Activated CD8-positive, alpha-beta T cell treated with anti-CD3 and anti-CD28 coated beads for 36 hours (primary cell): ENCODE measurements at regions of chr2 and their contacts with region 1.

Region 1: GRCh38 chr2:170409164-170409535 is 231.2 kb downstream of the MYO3B start:
- DNase-seq: peak; percentile 87
- ATAC-seq: peak; percentile 75
- H3K4me3 Mint-ChIP-seq: peak overlapping the region; percentile 39
- H3K27ac Mint-ChIP-seq: no peak overlapping the region
- H3K4me1 Mint-ChIP-seq: peaks cover 4% of the 10 kb centered on the region
- H3K27me3 Mint-ChIP-seq: peaks cover 20% of the 10 kb centered on the region
- CTCF ChIP-seq: peak; percentile 90

Region 2: DNA sequence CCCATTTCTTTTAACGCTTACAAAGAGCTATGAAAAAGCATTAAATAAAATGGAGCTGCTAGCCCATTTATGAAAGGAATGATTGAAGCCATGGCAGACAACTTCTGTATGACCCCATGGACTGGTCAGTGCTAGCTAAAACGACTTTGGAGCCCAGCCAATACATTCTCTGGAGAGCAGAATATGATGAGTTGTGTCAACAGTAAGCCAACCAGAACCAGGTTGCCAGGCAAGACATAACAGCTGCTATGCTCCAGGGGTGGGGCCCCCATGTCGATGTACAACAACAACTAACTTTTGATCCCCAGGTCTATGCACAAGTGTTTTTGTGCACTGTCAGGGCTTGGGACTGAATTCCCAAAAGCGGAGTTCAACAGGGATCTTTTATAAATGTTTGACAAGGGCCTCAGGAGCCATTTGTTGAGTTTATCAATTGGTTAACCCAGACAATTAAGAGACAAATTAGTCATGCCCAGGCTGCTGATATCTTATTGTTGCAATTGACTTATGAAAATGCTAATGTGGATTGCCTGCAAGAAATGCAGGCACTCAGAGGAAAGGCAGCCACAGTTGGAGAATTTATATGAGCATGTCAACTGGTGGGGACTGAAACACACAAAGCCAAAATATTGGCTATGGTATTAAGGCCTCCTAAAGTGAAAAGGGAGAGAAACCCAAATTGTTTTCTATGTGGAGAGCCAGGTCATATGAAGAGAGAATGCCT is 295.8 kb before region 1 on chr2:
- CTCF ChIA-PET with region 1: no interaction called
- POLR2A ChIA-PET with region 1: no interaction called
- intact Hi-C with region 1: no loop called
- DNase-seq: no peak
- ATAC-seq: no peak
- H3K4me3 Mint-ChIP-seq: no peak overlapping the region
- H3K27ac Mint-ChIP-seq: no peak overlapping the region
- H3K4me1 Mint-ChIP-seq: no peaks in the 10 kb centered on the region
- H3K27me3 Mint-ChIP-seq: no peaks in the 10 kb centered on the region
- CTCF ChIP-seq: no peak

Region 3: GRCh38 chr2:170202437-170202836 is 206.7 kb before region 1 on chr2:
- CTCF ChIA-PET with region 1: no interaction called
- POLR2A ChIA-PET with region 1: no interaction called
- intact Hi-C with region 1: no loop called
- DNase-seq: no peak
- ATAC-seq: no peak
- H3K4me3 Mint-ChIP-seq: no peak overlapping the region
- H3K27ac Mint-ChIP-seq: no peak overlapping the region
- H3K4me1 Mint-ChIP-seq: no peaks in the 10 kb centered on the region
- H3K27me3 Mint-ChIP-seq: peaks cover 10% of the 10 kb centered on the region
- CTCF ChIP-seq: no peak

Region 4: DNA sequence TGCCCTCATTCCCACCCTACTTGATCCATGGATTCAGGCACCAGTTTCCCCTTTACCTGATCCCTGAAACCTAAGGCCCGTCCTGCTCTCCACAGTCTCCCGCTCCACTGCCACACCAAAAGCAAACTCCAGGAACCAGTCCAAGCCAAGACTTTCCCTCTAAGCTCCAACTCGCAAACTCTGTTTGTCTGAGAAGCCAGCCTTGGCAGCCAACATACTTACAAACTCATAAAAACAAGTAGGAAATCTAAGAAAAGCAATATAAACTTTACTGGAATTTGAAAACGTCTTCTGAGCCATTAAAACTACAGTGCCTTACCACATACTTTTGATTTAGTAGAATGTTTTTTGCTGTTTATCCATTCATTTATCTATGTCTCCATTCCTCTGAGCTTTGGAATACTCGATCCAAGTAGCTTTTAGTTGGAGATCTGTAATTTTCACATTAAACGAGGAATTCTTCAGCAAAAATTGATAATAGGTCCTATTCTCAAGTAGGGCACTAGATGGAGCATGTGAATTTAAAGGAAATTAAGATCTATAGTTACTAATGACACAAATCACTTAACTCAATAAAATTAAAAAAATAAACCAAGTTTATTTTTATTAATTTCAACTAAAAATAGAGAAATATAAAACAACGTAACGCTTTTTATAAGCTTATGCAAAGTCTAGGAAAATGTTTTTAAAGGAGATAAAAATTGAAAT is 31.5 kb before region 1 on chr2:
- CTCF ChIA-PET with region 1: interaction called, 14 read pairs
- POLR2A ChIA-PET with region 1: no interaction called
- intact Hi-C with region 1: no loop called
- DNase-seq: no peak
- ATAC-seq: no peak
- H3K4me3 Mint-ChIP-seq: no peak overlapping the region
- H3K27ac Mint-ChIP-seq: no peak overlapping the region
- H3K4me1 Mint-ChIP-seq: peaks cover 8% of the 10 kb centered on the region
- H3K27me3 Mint-ChIP-seq: peaks cover 25% of the 10 kb centered on the region
- CTCF ChIP-seq: no peak

Region 5: DNA sequence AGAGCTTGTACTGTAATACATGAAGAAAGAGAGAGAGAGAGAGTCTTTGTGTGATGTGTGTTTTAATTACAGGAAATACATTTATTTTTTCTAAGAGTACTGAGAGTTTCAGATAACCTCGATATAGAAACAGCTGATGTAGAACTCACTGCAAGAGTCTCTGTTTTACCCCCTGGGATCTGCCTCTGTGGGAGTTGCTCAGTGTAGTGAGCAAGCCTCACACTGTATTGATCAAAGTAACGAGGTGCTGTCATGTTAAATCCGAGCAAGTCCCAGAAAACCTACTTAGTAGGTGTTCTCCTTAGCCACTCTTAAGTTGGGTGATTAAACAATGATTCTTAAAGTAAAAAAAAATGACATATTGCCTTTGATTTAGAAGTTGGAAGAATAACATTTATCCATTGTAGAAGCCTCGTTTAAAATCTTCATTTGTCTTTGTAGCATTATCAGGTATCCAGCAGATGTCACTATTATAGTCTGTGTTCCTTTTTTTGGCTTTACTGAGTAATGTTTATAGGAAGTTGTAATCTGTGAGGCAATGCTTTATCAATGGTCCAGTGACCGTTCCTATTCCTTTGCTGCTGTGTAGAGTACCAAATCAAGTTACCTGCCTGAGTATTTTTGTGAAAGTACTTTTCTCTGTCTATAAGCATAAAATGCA is 12.2 kb before region 1 on chr2:
- CTCF ChIA-PET with region 1: interaction called, 17 read pairs
- POLR2A ChIA-PET with region 1: no interaction called
- intact Hi-C with region 1: no loop called
- DNase-seq: no peak
- ATAC-seq: no peak
- H3K4me3 Mint-ChIP-seq: no peak overlapping the region
- H3K27ac Mint-ChIP-seq: no peak overlapping the region
- H3K4me1 Mint-ChIP-seq: no peaks in the 10 kb centered on the region
- H3K27me3 Mint-ChIP-seq: peaks cover 26% of the 10 kb centered on the region
- CTCF ChIP-seq: no peak

Region 6: GRCh38 chr2:170434900-170435621 is 25.9 kb after region 1 on chr2:
- CTCF ChIA-PET with region 1: interaction called, 21 read pairs
- POLR2A ChIA-PET with region 1: no interaction called
- intact Hi-C with region 1: no loop called
- DNase-seq: peak; percentile 21
- ATAC-seq: no peak
- H3K4me3 Mint-ChIP-seq: no peak overlapping the region
- H3K27ac Mint-ChIP-seq: no peak overlapping the region
- H3K4me1 Mint-ChIP-seq: peaks cover 21% of the 10 kb centered on the region
- H3K27me3 Mint-ChIP-seq: peaks cover 11% of the 10 kb centered on the region
- CTCF ChIP-seq: no peak

Region 7: GRCh38 chr2:170446082-170446481 is 36.9 kb after region 1 on chr2:
- CTCF ChIA-PET with region 1: no interaction called
- POLR2A ChIA-PET with region 1: no interaction called
- intact Hi-C with region 1: no loop called
- DNase-seq: no peak
- ATAC-seq: no peak
- H3K4me3 Mint-ChIP-seq: no peak overlapping the region
- H3K27ac Mint-ChIP-seq: no peak overlapping the region
- H3K4me1 Mint-ChIP-seq: no peaks in the 10 kb centered on the region
- H3K27me3 Mint-ChIP-seq: peaks cover 1% of the 10 kb centered on the region
- CTCF ChIP-seq: no peak